ENCODE measurements at regions of chr4 and their contacts with region 1.

Region 1: GRCh38 chr4:134935320-134935719 is 733.7 kb upstream of the PABPC4L start:
- DNase-seq: no peak
- ATAC-seq: peak; percentile 48; the same call in 2 of the 3 replicates
- H3K4me3 ChIP-seq: no peak overlapping the region
- H3K27ac ChIP-seq: no peak overlapping the region
- H3K4me1 ChIP-seq: no peaks in the 10 kb centered on the region
- H3K27me3 ChIP-seq: no peaks in the 10 kb centered on the region
- CTCF ChIP-seq: peak; percentile 54
- EP300 ChIP-seq: no peak
- POLR2A ChIP-seq: no peak
- RAD21 ChIP-seq: no peak

Region 2: GRCh38 chr4:133584714-133585113 is 1350.6 kb before region 1 on chr4:
- CTCF ChIA-PET with region 1: no interaction called
- POLR2A ChIA-PET with region 1: no interaction called
- in situ Hi-C with region 1: no loop called
- intact Hi-C with region 1: loop called (anchors 2 kb)
- DNase-seq: peak; percentile 3
- ATAC-seq: peak; percentile 87
- H3K4me3 ChIP-seq: no peak overlapping the region
- H3K27ac ChIP-seq: no peak overlapping the region
- H3K4me1 ChIP-seq: no peaks in the 10 kb centered on the region
- H3K27me3 ChIP-seq: no peaks in the 10 kb centered on the region
- CTCF ChIP-seq: peak; percentile 30
- EP300 ChIP-seq: no peak
- POLR2A ChIP-seq: no peak
- RAD21 ChIP-seq: no peak

Region 3: GRCh38 chr4:136441629-136442282 is 1506.4 kb after region 1 on chr4:
- CTCF ChIA-PET with region 1: no interaction called
- POLR2A ChIA-PET with region 1: no interaction called
- in situ Hi-C with region 1: no loop called
- intact Hi-C with region 1: no loop called
- DNase-seq: no peak
- ATAC-seq: peak; percentile 60
- H3K4me3 ChIP-seq: no peak overlapping the region
- H3K27ac ChIP-seq: no peak overlapping the region
- H3K4me1 ChIP-seq: no peaks in the 10 kb centered on the region
- H3K27me3 ChIP-seq: no peaks in the 10 kb centered on the region
- CTCF ChIP-seq: peak; percentile 16; the same call in 1 of the 2 replicates
- EP300 ChIP-seq: no peak
- POLR2A ChIP-seq: no peak
- RAD21 ChIP-seq: no peak